Lower leg skin (tissue), 4 donors: ENCODE measurements at regions of chr16 and their contacts with region 1.

Region 1: DNA sequence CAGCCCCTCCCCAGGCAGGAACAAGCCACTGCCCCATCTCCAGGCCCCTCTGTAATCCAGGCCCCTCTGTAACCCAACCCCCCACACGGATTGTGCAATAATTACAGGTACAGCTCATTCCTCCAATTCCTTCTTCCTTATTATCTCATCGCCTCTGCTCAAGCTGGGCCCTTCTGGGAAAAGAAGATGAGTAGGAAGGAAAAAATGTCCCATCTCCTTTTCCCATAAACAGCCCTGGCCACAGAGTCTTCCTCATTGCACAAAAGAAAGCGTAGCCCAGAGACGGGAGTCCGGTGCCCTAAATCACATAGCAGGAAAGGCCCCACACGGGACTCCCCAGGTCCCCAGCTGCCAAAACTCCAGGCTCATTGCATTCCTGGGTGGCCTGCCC is 3.6 kb upstream of the LITAFD start:
- DNase-seq: no peak
- H3K4me3 ChIP-seq: no peak overlapping the region
- CTCF ChIP-seq: no peak
- POLR2A ChIP-seq: no peak

Region 2: DNA sequence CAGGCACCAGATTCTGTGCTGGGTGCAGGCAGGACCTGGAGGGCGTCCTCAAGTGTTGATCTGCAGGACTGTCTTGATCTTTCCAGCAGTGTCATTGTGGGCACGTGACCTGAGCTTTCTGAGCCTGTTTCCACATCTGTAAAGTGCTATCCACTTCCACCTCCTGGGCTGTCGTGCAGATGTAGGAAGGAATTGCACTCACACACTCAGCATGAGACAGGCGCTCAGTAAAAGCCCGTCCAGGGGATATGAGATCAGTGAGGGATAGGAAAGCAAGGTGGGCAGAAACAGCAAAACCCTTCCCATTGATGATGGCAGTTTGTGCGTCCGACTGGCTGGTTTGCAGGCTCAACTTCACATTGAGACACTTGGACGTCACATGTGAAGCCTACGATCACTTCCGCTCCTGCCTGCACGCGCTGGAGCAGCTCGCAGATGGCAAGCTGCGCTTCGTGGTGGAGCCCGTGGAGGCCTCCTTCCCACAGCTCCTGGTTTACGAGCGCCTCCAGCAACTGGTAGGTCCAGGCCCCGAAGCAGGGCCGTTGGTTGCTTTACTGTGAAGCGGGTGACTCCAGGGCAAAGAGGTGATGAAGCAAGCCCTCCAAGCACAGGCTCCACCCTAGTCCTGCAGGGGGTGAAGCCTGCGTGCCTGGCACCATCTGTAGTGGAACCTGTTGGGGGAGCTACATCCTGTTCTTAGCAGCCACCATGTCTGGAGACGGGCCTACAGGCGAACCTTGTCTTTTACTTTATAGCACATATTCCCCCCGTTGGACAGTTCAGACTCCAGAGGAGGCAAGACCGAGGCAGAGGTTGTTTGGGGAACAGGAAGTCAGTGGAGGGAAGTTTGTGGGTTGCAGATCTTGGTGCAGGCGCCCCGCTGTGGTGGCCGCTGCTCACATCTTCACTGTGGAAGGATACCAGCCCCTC is 234.0 kb before region 1 on chr16:
- intact Hi-C with region 1: no loop called
- DNase-seq: no peak
- H3K4me3 ChIP-seq: no peak overlapping the region
- CTCF ChIP-seq: no peak
- POLR2A ChIP-seq: no peak

Region 3: GRCh38 chr16:8674413-8675022 is 204.0 kb before region 1 on chr16 and contains the start of gene ABAT:
- intact Hi-C with region 1: loop called (anchors 10 kb)
- DNase-seq: peak; percentile 82 to 97
- H3K4me3 ChIP-seq: peak within 1 kb of the TSS; percentile 17
- CTCF ChIP-seq: no peak
- POLR2A ChIP-seq: no peak
- total RNA-seq, gene ABAT: 1.5 to 5.1 (median 2.6) TPM

Region 4: DNA sequence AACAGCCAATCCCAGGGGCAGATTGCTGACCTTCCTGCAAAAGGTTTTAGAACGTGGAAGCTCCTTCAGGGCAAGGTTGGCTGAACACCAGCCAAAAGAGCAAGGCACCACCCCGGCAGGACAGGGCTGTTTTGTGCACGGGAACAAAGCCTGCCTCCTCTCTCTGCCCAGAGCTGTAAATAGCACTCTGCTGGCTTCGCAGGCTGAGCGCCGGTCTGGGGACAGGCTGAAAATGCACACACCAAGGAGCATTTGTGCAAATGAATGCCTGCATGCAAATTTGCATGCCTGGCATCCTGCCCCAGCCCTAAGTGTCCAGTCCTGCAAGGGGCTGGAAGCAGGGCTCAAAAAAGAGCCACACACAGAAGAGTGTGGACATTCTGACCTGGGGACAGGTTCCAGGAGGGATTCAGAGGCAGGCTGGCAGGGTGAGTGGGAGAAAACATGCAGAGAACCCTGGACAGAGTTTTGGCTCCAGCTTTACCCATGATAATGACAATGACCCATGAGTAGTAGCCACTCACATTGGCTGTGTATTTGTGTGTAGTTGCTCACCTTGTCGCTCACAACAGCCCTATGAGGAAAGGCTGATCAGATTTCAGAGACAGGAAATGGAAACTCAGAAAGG is 192.4 kb before region 1 on chr16:
- intact Hi-C with region 1: no loop called
- DNase-seq: no peak
- H3K4me3 ChIP-seq: no peak overlapping the region
- CTCF ChIP-seq: no peak
- POLR2A ChIP-seq: no peak

Region 5: GRCh38 chr16:8818504-8819270 is 59.8 kb before region 1 on chr16:
- intact Hi-C with region 1: loop called (anchors 5 kb)
- DNase-seq: no peak
- H3K4me3 ChIP-seq: no peak overlapping the region
- CTCF ChIP-seq: no peak
- POLR2A ChIP-seq: no peak

Region 6: DNA sequence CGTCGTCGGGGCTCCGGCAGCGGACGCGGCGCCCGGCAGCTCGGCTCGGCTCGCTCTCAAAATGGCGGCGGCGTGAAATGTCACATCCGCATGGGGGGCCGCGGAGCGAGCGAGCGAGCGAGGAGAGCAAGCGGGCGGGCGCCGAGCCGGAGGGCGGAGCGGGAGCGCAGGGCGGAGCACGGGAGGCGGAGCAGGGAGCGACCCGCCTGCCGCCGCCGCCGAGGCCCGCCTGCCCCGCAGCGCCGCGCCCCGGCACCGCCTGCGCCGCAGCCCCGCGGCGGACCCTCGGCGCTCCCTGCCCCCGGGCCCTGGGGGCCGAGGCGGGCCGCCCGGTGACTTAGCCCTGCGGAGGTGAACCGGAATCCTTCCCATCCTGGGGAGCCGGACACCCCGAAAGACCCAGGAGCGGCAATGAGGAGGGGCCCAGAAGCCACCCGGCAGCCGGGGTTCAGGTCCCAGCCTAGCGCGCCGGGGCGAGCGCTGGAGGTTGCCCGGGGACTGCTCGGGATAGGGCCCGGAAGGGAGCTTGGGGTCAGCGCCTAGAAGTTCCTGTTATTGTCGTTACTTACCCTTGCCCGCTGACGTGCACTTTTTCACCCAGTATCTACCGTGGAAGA is 85.4 kb after region 1 on chr16 and contains the start of gene USP7:
- intact Hi-C with region 1: no loop called
- DNase-seq: peak; percentile 86 to 98
- H3K4me3 ChIP-seq: peak within 1 kb of the TSS; percentile 55
- CTCF ChIP-seq: no peak
- POLR2A ChIP-seq: no peak
- total RNA-seq, gene USP7: 80.3 to 105 (median 91.8) TPM